Left cardiac atrium (tissue), 4 donors: ENCODE measurements at regions of chr21 and their contacts with region 1.

Region 1: GRCh38 chr21:45887120-45887611 is 94.4 kb upstream of the COL6A1 start:
- DNase-seq: peak; percentile 81
- ATAC-seq: peak; percentile 45 to 60

Region 2: DNA sequence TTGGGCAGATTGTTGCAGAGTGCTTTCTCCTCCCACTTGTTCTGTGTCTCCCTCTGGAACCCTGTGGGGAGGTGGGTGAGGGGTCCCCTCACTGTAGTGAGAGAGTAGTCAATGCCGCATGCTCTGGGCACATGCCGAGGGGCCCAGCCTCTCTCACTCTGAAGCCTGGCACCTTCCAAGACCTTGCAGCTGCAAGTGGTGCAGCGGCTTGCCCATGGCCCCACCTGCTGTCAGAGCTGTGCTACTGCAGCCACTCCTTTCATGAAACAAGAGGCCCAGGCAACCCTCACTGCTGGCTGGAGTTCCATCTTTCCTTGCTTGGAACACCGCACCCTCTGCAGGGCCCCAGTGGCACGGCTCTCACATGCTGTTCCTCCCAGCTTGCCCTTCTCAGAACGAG is 36.0 kb after region 1 on chr21:
- intact Hi-C with region 1: loop called in 1 of 2 experiments (anchors 5 kb)
- DNase-seq: peak; percentile 80
- ATAC-seq: peak; percentile 91 to 92

Region 3: GRCh38 chr21:45981151-45982089 is 94.3 kb after region 1 on chr21 and contains the start of gene COL6A1:
- intact Hi-C with region 1: no loop called
- DNase-seq: peak; percentile 87
- ATAC-seq: peak; percentile 79 to 80
- total RNA-seq, gene COL6A1: 244 to 247 TPM